ENCODE measurements at regions of chr1 and their contacts with region 1.

Region 1: GRCh38 chr1:214446772-214447556 is 104.4 kb downstream of the PTPN14 start:
- DNase-seq: peak; percentile 99
- ATAC-seq: peak; percentile 86
- H3K4me3 ChIP-seq: peak overlapping the region; percentile 59
- H3K27ac ChIP-seq: peak overlapping the region; percentile 95
- H3K4me1 ChIP-seq: peaks cover 48% of the 10 kb centered on the region
- H3K27me3 ChIP-seq: no peaks in the 10 kb centered on the region
- CTCF ChIP-seq: no peak

Region 2: GRCh38 chr1:214248311-214249085 is 198.5 kb before region 1 on chr1:
- CTCF ChIA-PET with region 1: no interaction called
- POLR2A ChIA-PET with region 1: no interaction called
- intact Hi-C with region 1: no loop called
- DNase-seq: peak; percentile 19
- ATAC-seq: peak; percentile 62
- H3K4me3 ChIP-seq: no peak overlapping the region
- H3K27ac ChIP-seq: no peak overlapping the region
- H3K4me1 ChIP-seq: no peaks in the 10 kb centered on the region; the same call in 1 of the 2 replicates
- H3K27me3 ChIP-seq: no peaks in the 10 kb centered on the region; the same call in 1 of the 2 replicates
- CTCF ChIP-seq: no peak

Region 3: GRCh38 chr1:214386747-214387146 is 60.2 kb before region 1 on chr1:
- CTCF ChIA-PET with region 1: no interaction called
- POLR2A ChIA-PET with region 1: no interaction called
- intact Hi-C with region 1: loop called (anchors 5 kb)
- DNase-seq: peak; percentile 17
- ATAC-seq: peak; percentile 83
- H3K4me3 ChIP-seq: no peak overlapping the region
- H3K27ac ChIP-seq: no peak overlapping the region
- H3K4me1 ChIP-seq: no peaks in the 10 kb centered on the region; the same call in 1 of the 2 replicates
- H3K27me3 ChIP-seq: no peaks in the 10 kb centered on the region
- CTCF ChIP-seq: no peak

Region 4: DNA sequence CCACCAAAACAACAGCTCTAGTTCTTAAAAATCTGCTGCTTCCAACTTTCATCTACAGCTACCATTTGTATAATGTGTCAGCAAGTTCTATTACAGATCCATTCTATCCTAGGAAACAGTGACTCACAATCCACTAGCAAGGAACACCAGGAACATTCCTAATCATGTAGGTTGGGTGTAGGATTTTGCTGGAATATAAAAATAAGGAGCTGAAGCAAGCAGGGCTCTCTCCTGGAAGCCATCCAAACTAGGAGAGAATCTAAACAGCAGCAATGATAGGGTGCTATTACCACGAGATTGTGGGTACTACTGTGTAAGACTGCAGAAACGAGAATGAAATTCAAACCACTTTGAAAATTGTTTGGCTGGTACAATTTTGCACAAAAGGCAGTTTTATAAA is 30.5 kb before region 1 on chr1:
- CTCF ChIA-PET with region 1: no interaction called
- POLR2A ChIA-PET with region 1: no interaction called
- intact Hi-C with region 1: no loop called
- DNase-seq: peak; percentile 11
- ATAC-seq: no peak
- H3K4me3 ChIP-seq: no peak overlapping the region
- H3K27ac ChIP-seq: no peak overlapping the region
- H3K4me1 ChIP-seq: 0 out of 2 replicates have a peak, but pooled peaks cover under 1% of the 10 kb centered on the region
- H3K27me3 ChIP-seq: no peaks in the 10 kb centered on the region
- CTCF ChIP-seq: no peak

Region 5: DNA sequence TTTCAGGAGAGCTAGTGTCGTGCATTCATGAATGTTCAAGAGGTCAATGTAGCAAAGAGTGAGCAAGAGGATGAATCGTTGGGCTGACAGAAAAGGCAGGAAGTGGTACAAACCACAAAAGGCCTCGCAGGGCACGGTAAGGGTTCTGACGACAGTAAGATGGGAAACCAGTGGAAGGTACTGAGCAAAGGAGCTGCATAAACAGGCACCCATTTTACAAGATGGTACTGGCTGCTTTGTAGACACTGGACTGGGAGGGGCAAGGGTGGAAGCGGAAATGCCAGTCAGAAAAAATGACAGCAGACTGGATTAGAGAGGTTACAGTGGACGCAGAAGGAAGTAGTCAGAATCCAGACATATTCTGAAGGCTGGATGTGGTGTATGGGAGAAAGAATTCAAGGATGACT is 19.1 kb before region 1 on chr1:
- CTCF ChIA-PET with region 1: no interaction called
- POLR2A ChIA-PET with region 1: no interaction called
- intact Hi-C with region 1: loop called (anchors 1 kb)
- DNase-seq: peak; percentile 96
- ATAC-seq: peak; percentile 93
- H3K4me3 ChIP-seq: no peak overlapping the region; the same call in 1 of the 2 replicates
- H3K27ac ChIP-seq: peak overlapping the region; percentile 90
- H3K4me1 ChIP-seq: peaks cover 29% of the 10 kb centered on the region
- H3K27me3 ChIP-seq: no peaks in the 10 kb centered on the region
- CTCF ChIP-seq: no peak

Region 6: GRCh38 chr1:214466403-214467077 is 19.6 kb after region 1 on chr1:
- CTCF ChIA-PET with region 1: no interaction called
- POLR2A ChIA-PET with region 1: no interaction called
- intact Hi-C with region 1: loop called (anchors 1 kb)
- DNase-seq: peak; percentile 81
- ATAC-seq: peak; percentile 58
- H3K4me3 ChIP-seq: peak overlapping the region; percentile 0; the same call in 1 of the 2 replicates
- H3K27ac ChIP-seq: peak overlapping the region; percentile 30
- H3K4me1 ChIP-seq: peaks cover 29% of the 10 kb centered on the region
- H3K27me3 ChIP-seq: no peaks in the 10 kb centered on the region
- CTCF ChIP-seq: no peak

Region 7: GRCh38 chr1:214476958-214477870 is 30.2 kb after region 1 on chr1:
- CTCF ChIA-PET with region 1: no interaction called
- POLR2A ChIA-PET with region 1: no interaction called
- intact Hi-C with region 1: loop called (anchors 1 kb)
- DNase-seq: no peak
- ATAC-seq: no peak
- H3K4me3 ChIP-seq: no peak overlapping the region; the same call in 1 of the 2 replicates
- H3K27ac ChIP-seq: peak overlapping the region; percentile 56; the same call in 1 of the 2 replicates
- H3K4me1 ChIP-seq: peaks cover 39% of the 10 kb centered on the region
- H3K27me3 ChIP-seq: no peaks in the 10 kb centered on the region
- CTCF ChIP-seq: no peak

Region 8: GRCh38 chr1:214515544-214516429 is 68.8 kb after region 1 on chr1:
- CTCF ChIA-PET with region 1: no interaction called
- POLR2A ChIA-PET with region 1: no interaction called
- intact Hi-C with region 1: loop called (anchors 2 kb)
- DNase-seq: no peak
- ATAC-seq: no peak
- H3K4me3 ChIP-seq: peak overlapping the region; percentile 37
- H3K27ac ChIP-seq: peak overlapping the region; percentile 39
- H3K4me1 ChIP-seq: peaks cover 49% of the 10 kb centered on the region
- H3K27me3 ChIP-seq: no peaks in the 10 kb centered on the region
- CTCF ChIP-seq: no peak

Region 9: GRCh38 chr1:214566158-214567104 is 119.5 kb after region 1 on chr1:
- CTCF ChIA-PET with region 1: no interaction called
- POLR2A ChIA-PET with region 1: no interaction called
- intact Hi-C with region 1: loop called (anchors 5 kb)
- DNase-seq: peak; percentile 96
- ATAC-seq: peak; percentile 64
- H3K4me3 ChIP-seq: peak overlapping the region; percentile 6; the same call in 1 of the 2 replicates
- H3K27ac ChIP-seq: peak overlapping the region; percentile 86
- H3K4me1 ChIP-seq: peaks cover 64% of the 10 kb centered on the region
- H3K27me3 ChIP-seq: no peaks in the 10 kb centered on the region
- CTCF ChIP-seq: no peak

Region 10: GRCh38 chr1:215660259-215660658 is 1213.3 kb after region 1 on chr1:
- CTCF ChIA-PET with region 1: no interaction called
- POLR2A ChIA-PET with region 1: no interaction called
- intact Hi-C with region 1: no loop called
- DNase-seq: no peak
- ATAC-seq: no peak
- H3K4me3 ChIP-seq: no peak overlapping the region
- H3K27ac ChIP-seq: no peak overlapping the region
- H3K4me1 ChIP-seq: no peaks in the 10 kb centered on the region
- H3K27me3 ChIP-seq: peaks cover 58% of the 10 kb centered on the region
- CTCF ChIP-seq: no peak